ENCODE measurements at regions of chr15 and their contacts with region 1.

Region 1: GRCh38 chr15:55290528-55291057 is 980 bp upstream of the RAB27A start:
- DNase-seq: peak; percentile 95
- H3K4me3 Mint-ChIP-seq: peak overlapping the region; percentile 95
- H3K27ac Mint-ChIP-seq: peak overlapping the region; percentile 90
- H3K4me1 Mint-ChIP-seq: peaks cover 34% of the 10 kb centered on the region
- H3K27me3 Mint-ChIP-seq: no peaks in the 10 kb centered on the region

Region 2: DNA sequence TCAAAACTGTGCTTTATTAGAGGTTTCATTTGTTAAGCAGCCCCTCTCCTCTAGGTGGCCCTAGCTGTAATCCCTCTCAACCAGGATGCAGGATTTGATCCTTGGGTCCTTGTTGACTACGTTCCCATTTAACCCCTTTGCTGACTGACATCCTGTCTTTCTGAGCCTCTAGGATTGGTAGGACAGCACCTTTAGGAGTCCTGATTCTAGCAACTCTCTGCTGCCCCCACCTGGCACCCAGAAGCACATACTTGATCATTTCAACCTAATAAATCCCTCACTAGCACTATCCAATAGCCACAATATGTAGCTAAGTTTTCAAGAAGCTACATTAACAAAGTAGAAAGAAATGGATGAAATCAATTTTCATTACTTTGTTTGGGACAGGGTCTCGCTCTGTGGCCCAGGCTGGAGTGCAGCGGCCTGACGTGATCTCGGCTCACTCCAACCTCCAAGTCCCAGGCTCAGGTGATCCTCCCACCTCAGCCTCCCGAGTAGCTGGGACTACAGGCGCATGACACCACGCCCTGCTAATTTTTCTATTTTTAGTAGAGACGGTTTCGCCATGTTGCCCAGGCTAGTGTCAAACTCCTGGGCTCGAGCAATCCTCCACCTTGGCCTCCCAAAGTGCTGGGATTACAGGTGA is 122.1 kb before region 1 on chr15:
- intact Hi-C with region 1: no loop called
- DNase-seq: peak; percentile 83
- H3K4me3 Mint-ChIP-seq: no peak overlapping the region
- H3K27ac Mint-ChIP-seq: no peak overlapping the region
- H3K4me1 Mint-ChIP-seq: no peaks in the 10 kb centered on the region
- H3K27me3 Mint-ChIP-seq: no peaks in the 10 kb centered on the region

Region 3: GRCh38 chr15:55221090-55222011 is 69.2 kb before region 1 on chr15:
- intact Hi-C with region 1: loop called (anchors 1 kb)
- DNase-seq: peak; percentile 68
- H3K4me3 Mint-ChIP-seq: peak overlapping the region; percentile 48
- H3K27ac Mint-ChIP-seq: peak overlapping the region; percentile 95
- H3K4me1 Mint-ChIP-seq: peaks cover 62% of the 10 kb centered on the region
- H3K27me3 Mint-ChIP-seq: no peaks in the 10 kb centered on the region

Region 4: DNA sequence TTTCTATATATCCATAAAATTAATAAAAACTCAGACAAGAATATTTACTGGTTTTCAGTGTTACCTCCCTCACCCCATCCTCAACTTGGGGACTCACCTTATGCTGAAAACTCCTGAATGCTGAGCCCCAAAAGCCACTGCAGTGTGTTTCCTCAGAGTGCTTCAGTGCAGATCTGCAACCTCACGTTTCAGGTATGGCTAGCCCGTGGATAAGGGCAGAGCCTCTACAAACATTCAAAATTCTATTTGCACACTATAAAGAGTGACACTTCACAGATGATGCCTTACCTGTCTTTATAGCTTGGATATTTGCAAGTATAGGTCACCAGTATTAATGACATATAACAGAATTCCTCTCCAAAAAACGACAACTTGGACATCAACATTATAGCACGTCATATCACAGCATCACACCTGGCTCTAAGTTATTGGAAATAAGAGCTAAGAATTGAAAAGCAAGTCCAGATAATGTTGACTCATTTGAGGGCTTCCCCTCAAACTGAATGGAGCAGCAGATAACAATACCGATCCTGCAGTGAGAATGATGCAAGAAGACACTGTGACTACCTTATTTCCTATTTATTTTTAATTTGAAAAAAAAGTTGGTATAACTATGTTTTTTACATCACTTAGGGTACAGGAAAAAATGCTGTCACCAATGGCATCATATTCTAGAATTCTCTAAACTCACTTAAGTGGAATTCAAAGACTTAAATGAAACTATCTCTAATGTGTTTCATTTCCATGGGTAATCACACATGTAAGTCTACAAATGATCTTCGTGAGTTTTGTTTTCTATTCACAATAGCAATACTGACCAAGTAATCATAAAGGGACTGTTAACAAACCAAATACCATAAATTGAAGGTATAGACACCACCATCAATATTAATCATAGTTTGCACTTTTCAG is 53.1 kb before region 1 on chr15:
- intact Hi-C with region 1: no loop called
- DNase-seq: no peak
- H3K4me3 Mint-ChIP-seq: peak overlapping the region; percentile 28
- H3K27ac Mint-ChIP-seq: peak overlapping the region; percentile 88
- H3K4me1 Mint-ChIP-seq: peaks cover 55% of the 10 kb centered on the region
- H3K27me3 Mint-ChIP-seq: no peaks in the 10 kb centered on the region

Region 5: DNA sequence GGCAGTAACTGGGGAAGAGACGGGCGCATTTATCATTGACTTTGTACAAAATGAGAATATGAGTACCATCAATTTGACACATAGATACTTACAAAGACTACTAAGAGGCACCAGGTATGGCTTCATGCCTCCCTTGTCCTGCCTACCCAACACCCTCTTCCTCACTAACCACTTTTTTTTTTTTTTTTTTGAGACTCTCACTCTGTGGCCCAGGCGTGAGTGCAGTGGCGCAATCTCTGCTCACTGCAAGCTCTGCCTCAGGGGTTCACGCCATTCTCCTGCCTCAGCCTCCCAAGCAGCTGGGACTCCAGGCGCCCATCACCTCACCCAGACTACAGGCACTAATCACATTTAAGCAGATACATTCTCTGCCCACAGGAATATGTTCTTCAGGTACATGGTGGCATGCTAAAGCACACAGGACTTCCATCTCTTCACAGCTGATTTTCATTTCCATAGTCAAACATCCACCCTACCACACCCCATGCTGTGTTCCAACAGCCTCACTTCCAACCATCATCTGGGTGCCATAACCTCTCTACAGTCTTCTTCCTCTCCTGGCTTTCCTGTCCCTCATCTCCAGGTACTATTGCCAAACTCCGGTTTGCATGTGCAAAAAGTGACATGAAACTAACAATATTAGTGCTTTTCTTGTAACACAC is 42.7 kb before region 1 on chr15:
- intact Hi-C with region 1: no loop called
- DNase-seq: no peak
- H3K4me3 Mint-ChIP-seq: no peak overlapping the region
- H3K27ac Mint-ChIP-seq: peak overlapping the region; percentile 14
- H3K4me1 Mint-ChIP-seq: peaks cover 46% of the 10 kb centered on the region
- H3K27me3 Mint-ChIP-seq: no peaks in the 10 kb centered on the region

Region 6: GRCh38 chr15:55267401-55268175 is 23.0 kb before region 1 on chr15:
- intact Hi-C with region 1: loop called (anchors 2 kb)
- DNase-seq: peak; percentile 89
- H3K4me3 Mint-ChIP-seq: peak overlapping the region; percentile 81
- H3K27ac Mint-ChIP-seq: peak overlapping the region; percentile 97
- H3K4me1 Mint-ChIP-seq: peaks cover 54% of the 10 kb centered on the region
- H3K27me3 Mint-ChIP-seq: no peaks in the 10 kb centered on the region

Region 7: DNA sequence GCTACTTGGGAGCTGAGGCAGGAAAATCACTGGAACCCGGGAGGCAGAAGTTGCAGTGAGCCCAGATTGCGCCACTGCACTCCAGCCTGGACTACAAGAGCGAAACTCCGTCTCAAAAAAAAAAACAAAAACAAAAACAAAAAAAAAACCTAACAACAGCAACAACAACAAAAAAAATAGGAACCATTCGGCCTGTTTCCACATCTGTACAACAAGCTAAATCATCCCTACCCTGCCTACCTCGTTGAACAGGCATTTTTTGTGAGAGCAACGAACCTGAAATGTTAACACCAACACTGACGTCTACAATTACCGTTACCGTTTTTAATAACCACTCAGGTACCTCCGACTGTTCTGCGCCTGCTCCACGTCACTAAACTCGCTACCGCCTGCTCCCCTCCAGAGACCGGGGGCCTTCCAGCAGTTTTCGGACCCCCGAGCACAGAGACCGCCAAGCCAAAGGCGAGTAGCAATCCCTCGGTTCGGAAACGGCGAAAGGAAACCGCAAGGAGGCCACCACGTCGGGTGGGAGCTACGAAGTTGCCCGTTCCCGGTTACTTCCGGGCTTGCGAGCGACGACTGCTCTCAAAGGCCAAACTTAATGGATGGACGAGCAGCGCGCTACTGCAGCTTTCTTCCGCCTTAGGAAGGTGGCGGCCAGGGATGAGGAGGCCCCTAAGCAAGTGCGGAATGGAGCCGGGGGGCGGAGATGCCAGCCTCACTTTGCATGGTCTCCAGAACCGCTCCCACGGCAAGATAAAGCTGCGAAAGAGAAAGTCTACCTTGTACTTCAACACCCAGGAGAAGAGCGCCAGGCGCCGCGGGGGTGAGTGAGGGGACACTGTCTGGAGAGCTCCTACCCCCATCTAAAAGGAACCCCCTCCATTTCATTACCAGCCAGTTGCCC is 28.2 kb after region 1 on chr15 and contains the starts of genes PIGB and PIGBOS1:
- intact Hi-C with region 1: loop called (anchors 1 kb)
- DNase-seq: peak; percentile 95
- H3K4me3 Mint-ChIP-seq: peak within 1 kb of the TSS; percentile 97
- H3K27ac Mint-ChIP-seq: peak within 1 kb of the TSS; percentile 99
- H3K4me1 Mint-ChIP-seq: peaks cover 39% of the 10 kb centered on the region
- H3K27me3 Mint-ChIP-seq: no peaks in the 10 kb centered on the region
- total RNA-seq, gene PIGB: 13.3 and 18.6 TPM in 2 replicates
- total RNA-seq, gene PIGBOS1: 9.7 and 10.3 TPM in 2 replicates

Region 8: GRCh38 chr15:55372701-55373440 is 82.3 kb after region 1 on chr15:
- intact Hi-C with region 1: no loop called
- DNase-seq: no peak
- H3K4me3 Mint-ChIP-seq: no peak overlapping the region
- H3K27ac Mint-ChIP-seq: peak overlapping the region; percentile 35
- H3K4me1 Mint-ChIP-seq: peaks cover 12% of the 10 kb centered on the region
- H3K27me3 Mint-ChIP-seq: no peaks in the 10 kb centered on the region

Measured in activated CD4-positive, alpha-beta T cell treated with anti-CD3 and anti-CD28 coated beads, Interleukin-2, amount 10 ng/mL, durations not matched to agents 24 days and 14 days (primary cell).